ENCODE measurements at regions of chr10 and their contacts with region 1.

Region 1: GRCh38 chr10:79184145-79184625 is 115.4 kb downstream of the ZMIZ1 start:
- DNase-seq: peak; percentile 77
- ATAC-seq: peak; percentile 44
- H3K4me3 ChIP-seq: peak overlapping the region in 1 of 3 experiments; percentile 50; a peak in 2 of 6 replicates
- H3K27ac ChIP-seq: peak overlapping the region; percentile 93
- H3K4me1 ChIP-seq: peaks cover 100% of the 10 kb centered on the region
- H3K27me3 ChIP-seq: no peaks in the 10 kb centered on the region
- CTCF ChIP-seq: no peak
- EP300 ChIP-seq: peak; percentile 28 to 78; a peak in 2 of 4 replicates
- POLR2A ChIP-seq: peak; percentile 34 to 52; a peak in 2 of 4 replicates
- RAD21 ChIP-seq: 0 out of 2 replicates have a peak, but pooled peaks have one; percentile 10

Region 2: DNA sequence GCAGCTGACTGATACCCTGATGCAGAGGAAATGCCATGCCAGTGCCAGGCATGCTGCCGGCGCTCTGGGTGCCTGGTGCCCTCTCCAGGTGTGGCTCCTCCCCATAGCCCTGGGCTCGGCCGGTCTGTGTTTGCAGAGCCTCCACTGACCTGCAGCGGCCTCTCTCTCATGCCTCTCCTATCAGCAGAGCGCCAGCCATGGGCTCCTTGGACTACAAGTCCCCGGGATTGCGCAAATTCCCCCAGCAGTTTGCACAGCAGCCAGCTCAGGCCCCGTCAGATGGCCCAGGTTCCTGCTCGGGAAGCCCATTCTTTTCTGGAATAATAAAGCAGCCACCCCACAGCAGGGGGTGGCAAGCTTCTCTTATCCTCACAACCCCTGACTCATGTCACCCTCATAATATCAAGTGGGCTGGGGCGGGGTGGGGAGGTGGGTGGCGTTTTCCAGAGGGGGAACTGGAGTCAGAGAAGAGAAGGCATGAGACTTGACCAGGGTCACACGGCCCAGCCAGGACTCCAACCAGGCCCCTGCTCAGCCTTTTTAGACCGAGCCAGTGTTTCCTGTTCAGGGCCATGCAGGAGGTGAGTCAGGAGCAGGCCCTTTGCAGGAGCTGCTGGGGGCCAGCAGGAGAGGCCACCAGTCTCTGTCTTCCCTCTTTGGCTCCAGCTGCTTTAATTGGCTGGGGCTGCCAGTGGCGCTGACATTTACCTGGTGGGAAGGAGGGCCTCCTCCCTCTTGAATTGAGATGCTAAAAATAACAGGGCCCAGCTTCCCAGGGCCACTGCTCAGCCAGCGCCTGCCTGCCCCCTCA is 56.8 kb before region 1 on chr10:
- CTCF ChIA-PET with region 1: no interaction called
- POLR2A ChIA-PET with region 1: no interaction called
- in situ Hi-C with region 1: no loop called
- intact Hi-C with region 1: loop called (anchors 2 kb)
- DNase-seq: peak; percentile 92
- ATAC-seq: peak; percentile 95
- H3K4me3 ChIP-seq: no peak overlapping the region
- H3K27ac ChIP-seq: peak overlapping the region; percentile 51
- H3K4me1 ChIP-seq: peaks cover 73% of the 10 kb centered on the region
- H3K27me3 ChIP-seq: no peaks in the 10 kb centered on the region
- CTCF ChIP-seq: peak; percentile 63
- EP300 ChIP-seq: peak in 1 of 2 experiments; percentile 71; a peak in 2 of 4 replicates
- POLR2A ChIP-seq: no peak
- RAD21 ChIP-seq: peak; percentile 72